ENCODE measurements at regions of chr1 and their contacts with region 1.

Region 1: DNA sequence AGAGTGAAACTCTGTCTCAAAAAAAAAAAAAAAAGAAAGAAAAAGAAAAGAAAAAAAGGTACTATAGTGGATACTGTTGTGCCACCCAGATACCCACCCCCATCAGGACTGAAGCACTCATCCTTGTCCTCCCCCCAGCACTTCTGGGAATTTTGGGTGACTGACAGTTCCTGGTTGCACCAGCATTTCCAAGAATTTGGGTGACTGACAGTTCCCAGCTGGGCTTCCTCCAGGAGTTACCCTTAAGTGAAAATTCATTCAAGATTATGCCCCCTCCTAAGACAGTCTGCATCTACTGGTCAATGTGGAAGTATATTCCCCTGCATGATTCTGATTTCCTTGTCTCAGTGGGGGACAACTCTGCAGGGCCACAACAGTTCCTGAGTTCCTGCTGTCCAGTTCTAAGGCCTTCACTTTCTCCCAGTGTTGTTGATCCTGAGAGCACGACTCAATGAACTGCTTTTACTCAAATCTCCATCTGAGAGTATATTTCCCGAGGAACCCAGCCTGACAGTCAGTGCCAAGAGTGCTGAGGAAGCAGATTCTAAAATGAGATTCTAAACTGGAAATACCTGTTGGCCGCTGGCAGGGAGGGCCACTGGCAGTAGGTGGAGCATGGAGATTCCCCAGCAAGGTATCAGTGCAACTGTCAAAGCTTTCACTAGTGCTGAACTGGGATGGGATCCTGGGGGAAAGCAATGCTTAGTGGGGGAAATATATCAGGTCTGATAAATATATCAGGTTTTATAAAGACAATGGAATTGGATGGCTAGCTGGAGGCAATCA is 18.5 kb downstream of the RIIAD1 start:
- H3K4me3 Mint-ChIP-seq: peak overlapping the region; percentile 11
- H3K27ac Mint-ChIP-seq: no peak overlapping the region
- H3K4me1 Mint-ChIP-seq: peaks cover 16% of the 10 kb centered on the region
- H3K27me3 Mint-ChIP-seq: peaks cover 21% of the 10 kb centered on the region

Region 2: GRCh38 chr1:151443846-151444782 is 295.7 kb before region 1 on chr1:
- intact Hi-C with region 1: loop called (anchors 2 kb)
- H3K4me3 Mint-ChIP-seq: no peak overlapping the region
- H3K27ac Mint-ChIP-seq: peak overlapping the region; percentile 38
- H3K4me1 Mint-ChIP-seq: peaks cover 18% of the 10 kb centered on the region
- H3K27me3 Mint-ChIP-seq: no peaks in the 10 kb centered on the region

Region 3: DNA sequence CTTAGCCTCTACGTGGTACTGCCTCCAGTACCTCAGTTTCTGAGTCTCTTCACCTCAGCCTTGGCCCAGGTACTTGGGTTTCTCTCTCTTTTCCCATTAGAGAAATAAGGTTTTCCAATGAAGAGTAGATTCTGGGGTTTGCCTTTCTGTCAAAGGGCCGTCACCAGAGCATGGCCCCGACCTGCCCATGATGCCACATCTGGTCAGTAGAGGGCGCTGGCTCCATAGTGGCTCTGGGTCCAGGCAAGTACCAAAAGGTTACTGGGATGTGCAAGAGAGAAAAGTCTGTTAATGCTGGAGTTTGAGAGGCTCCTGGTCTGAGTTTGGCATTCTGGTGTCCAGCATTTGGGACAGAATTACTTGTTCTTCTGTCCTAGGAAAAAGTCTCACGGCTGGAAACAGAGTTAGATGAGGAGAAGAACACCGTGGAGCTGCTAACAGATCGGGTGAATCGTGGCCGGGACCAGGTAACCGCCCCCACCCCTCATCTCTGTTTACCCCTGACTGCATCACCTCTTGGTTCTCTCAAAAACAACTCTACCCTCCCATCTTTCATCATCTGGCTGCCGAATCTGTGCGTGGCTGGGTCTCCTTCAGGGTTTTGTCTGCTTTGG is 205.0 kb before region 1 on chr1:
- intact Hi-C with region 1: loop called (anchors 1 kb)
- H3K4me3 Mint-ChIP-seq: no peak overlapping the region
- H3K27ac Mint-ChIP-seq: no peak overlapping the region
- H3K4me1 Mint-ChIP-seq: peaks cover 17% of the 10 kb centered on the region
- H3K27me3 Mint-ChIP-seq: peaks cover 11% of the 10 kb centered on the region

Measured in dendritic cell treated with granulocyte-macrophage colony-stimulating factor and Interleukin-4, amounts not matched to agents 40 ng/mL and 50 ng/mL, for 4 days (primary cell).